CD14-positive monocyte (primary cell): ENCODE measurements at regions of chr10 and their contacts with region 1.

Region 1: GRCh38 chr10:99711129-99711719 is 20.7 kb downstream of the COX15 start:
- DNase-seq: peak; percentile 49 to 70 (median 61)
- H3K4me3 ChIP-seq: no peak overlapping the region
- H3K4me3 Mint-ChIP-seq: no peak overlapping the region
- H3K27ac ChIP-seq: no peak overlapping the region
- H3K27ac Mint-ChIP-seq: peak overlapping the region in 2 of 7 donors; percentile 60 to 62
- H3K4me1 ChIP-seq: no peaks in the 10 kb centered on the region
- H3K4me1 Mint-ChIP-seq: peaks cover 2% of the 10 kb centered on the region
- H3K27me3 ChIP-seq: no peaks in the 10 kb centered on the region
- H3K27me3 Mint-ChIP-seq: no peaks in the 10 kb centered on the region
- CTCF ChIP-seq: peak; percentile 69

Region 2: DNA sequence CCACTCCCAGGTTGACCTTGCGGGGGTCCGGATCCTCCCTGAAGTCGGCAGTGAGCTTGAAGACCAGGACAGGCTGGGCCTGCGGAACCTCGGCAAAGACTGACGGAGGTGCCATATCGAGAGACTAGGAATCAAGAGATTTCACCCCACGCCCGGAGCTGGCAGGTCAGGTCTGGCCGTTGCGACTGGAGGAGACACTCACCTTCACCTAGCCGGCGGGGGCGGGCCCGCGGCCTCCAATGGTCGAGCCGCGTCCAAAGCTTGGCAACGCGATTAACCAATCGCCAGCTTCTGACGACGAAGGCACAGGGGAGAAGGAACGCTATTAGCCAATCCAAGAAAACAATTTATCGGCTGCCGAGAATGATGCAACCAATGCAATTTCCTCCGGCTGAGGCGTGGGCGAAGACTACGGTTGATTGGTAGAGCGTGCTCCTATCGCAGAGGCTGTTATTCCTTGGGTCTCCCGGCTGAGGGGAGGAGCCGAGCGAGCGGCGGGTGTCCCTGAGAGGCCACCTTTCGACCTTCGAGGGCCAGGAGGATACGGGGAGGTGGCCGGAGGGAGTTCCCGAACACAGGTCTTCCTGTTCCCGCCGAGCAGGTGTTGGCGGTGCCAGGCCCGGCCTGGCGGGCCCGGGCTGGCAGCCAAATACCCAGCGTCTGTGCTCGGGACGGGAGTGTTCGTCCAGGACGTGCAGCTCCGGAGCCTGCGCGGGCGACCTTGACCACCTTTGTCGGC is 280.6 kb before region 1 on chr10 and contains the start of gene GOT1:
- intact Hi-C with region 1: loop called (anchors 5 to 10 kb)
- DNase-seq: peak; percentile 94 to 98 (median 96)
- H3K4me3 ChIP-seq: peak within 1 kb of the TSS; percentile 41 to 76 (median 64)
- H3K4me3 Mint-ChIP-seq: peak within 1 kb of the TSS; percentile 99 to 100
- H3K27ac ChIP-seq: peak within 1 kb of the TSS; percentile 83 to 84
- H3K27ac Mint-ChIP-seq: peak within 1 kb of the TSS; percentile 95 to 99 (median 97)
- H3K4me1 ChIP-seq: peaks cover 12 to 19% of the 10 kb centered on the region in 2 donors
- H3K4me1 Mint-ChIP-seq: peaks cover 22% of the 10 kb centered on the region
- H3K27me3 ChIP-seq: no peaks in the 10 kb centered on the region
- H3K27me3 Mint-ChIP-seq: peaks cover 0 to 8% (median 0%) of the 10 kb centered on the region in 3 donors
- CTCF ChIP-seq: no peak
- polyA plus RNA-seq, gene GOT1: 2.6 to 10.4 (median 8.2) TPM

Region 3: DNA sequence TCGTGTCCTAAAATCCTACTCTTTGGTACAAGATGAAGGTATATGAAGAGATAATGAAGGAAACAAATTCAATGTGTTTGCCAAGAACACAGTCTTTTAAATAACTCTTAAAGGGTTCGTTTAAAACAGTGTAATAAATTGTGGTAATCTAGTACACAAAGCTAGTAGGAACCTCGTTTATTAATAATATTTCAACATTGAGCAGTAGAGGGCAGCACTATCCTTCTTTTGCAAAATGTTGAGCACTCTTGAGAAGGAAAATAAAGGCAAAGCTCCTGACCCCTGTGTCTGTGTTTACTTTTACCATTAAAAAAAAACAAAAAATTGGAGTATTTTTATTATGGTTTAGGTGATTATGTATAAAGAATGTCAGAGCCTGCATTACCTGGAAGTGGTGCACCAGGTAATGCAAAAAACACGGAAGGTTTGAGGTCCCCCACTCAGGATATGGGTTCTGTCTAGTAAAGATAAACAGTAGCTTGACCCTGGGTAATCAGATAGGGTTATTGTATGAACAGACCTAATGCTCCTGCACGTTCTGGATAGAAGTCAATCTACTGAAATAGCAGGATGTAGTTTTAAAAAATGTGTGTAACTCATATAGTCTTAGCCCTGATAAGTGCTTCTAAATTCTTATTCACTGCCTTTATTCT is 275.1 kb before region 1 on chr10:
- intact Hi-C with region 1: loop called (anchors 5 to 10 kb)
- DNase-seq: peak; percentile 9 to 42 (median 14)
- H3K4me3 ChIP-seq: no peak overlapping the region
- H3K4me3 Mint-ChIP-seq: no peak overlapping the region
- H3K27ac ChIP-seq: no peak overlapping the region
- H3K27ac Mint-ChIP-seq: no peak overlapping the region
- H3K4me1 ChIP-seq: peaks cover 4 to 5% of the 10 kb centered on the region in 2 donors
- H3K4me1 Mint-ChIP-seq: peaks cover 8% of the 10 kb centered on the region
- H3K27me3 ChIP-seq: no peaks in the 10 kb centered on the region
- H3K27me3 Mint-ChIP-seq: peaks cover 0 to 7% (median 0%) of the 10 kb centered on the region in 3 donors
- CTCF ChIP-seq: peak; percentile 72

Region 4: GRCh38 chr10:99560277-99561126 is 150.7 kb before region 1 on chr10:
- intact Hi-C with region 1: loop called (anchors 1 to 5 kb)
- DNase-seq: peak; percentile 25 to 62 (median 58)
- H3K4me3 ChIP-seq: no peak overlapping the region
- H3K4me3 Mint-ChIP-seq: no peak overlapping the region
- H3K27ac ChIP-seq: no peak overlapping the region
- H3K27ac Mint-ChIP-seq: no peak overlapping the region
- H3K4me1 ChIP-seq: no peaks in the 10 kb centered on the region
- H3K4me1 Mint-ChIP-seq: peaks cover 10% of the 10 kb centered on the region
- H3K27me3 ChIP-seq: no peaks in the 10 kb centered on the region
- H3K27me3 Mint-ChIP-seq: peaks cover 2 to 3% (median 2%) of the 10 kb centered on the region in 3 donors
- CTCF ChIP-seq: peak; percentile 89

Region 5: GRCh38 chr10:99630439-99630838 is 80.8 kb before region 1 on chr10:
- intact Hi-C with region 1: loop called (anchors 2 to 5 kb)
- DNase-seq: peak in 2 of 3 donors; percentile 39 to 56
- H3K4me3 ChIP-seq: no peak overlapping the region
- H3K4me3 Mint-ChIP-seq: no peak overlapping the region
- H3K27ac ChIP-seq: no peak overlapping the region
- H3K27ac Mint-ChIP-seq: peak overlapping the region in 1 of 7 donors; percentile 68
- H3K4me1 ChIP-seq: no peaks in the 10 kb centered on the region
- H3K4me1 Mint-ChIP-seq: peaks cover 3% of the 10 kb centered on the region
- H3K27me3 ChIP-seq: no peaks in the 10 kb centered on the region
- H3K27me3 Mint-ChIP-seq: peaks cover 0 to 3% (median 2%) of the 10 kb centered on the region in 3 donors
- CTCF ChIP-seq: peak; percentile 65